Common myeloid progenitor, CD34-positive (primary cell): ENCODE measurements at regions of chr2 and their contacts with region 1.

Region 1: DNA sequence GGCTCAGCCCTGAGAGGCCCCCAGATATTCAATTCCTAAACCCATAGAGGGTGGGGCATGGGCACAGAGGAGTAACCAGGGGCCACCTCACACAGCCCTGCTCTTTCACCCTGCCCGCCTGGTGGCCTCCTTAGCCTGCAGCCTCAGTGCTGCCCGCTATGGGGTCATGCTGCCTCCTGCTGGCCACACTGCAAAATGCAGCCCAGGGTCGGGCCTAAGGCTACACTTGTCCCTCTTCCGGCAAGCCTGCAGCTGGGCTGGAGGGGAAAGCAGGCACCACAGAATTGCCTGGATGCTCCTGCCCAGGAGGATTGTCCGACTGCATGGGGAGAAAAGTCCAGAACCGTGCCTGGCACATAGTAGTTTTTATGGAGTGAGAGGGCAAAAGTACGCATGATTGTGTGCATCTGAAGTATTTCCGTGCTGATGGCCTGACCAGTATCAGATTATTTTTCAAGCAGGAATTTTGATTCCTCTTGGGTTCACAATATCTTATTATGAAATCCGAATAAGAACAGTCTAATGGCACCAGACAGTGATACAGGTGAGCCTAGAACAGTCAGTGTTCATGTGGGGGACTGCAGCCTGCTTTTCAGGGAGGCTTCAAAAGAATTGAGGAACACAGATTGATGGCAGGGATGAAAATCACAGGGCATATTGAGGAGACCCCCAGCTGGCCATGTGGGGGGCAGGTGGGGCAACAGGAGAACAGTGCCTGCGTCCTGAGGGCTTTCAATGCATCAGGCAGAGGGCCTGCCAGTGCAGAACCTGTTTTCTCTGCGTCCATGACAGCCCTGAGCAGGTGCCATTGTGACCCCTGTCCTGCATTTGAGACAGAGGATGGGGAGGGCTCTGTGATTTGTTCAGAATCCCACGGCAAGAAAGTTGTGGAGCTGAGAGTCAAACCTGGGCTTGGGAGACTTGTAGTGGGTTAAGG is 51.2 kb upstream of the ALPP start:
- DNase-seq: peak; percentile 72 to 84 (median 78)
- H3K4me3 ChIP-seq: no peak overlapping the region
- H3K27ac ChIP-seq: no peak overlapping the region
- H3K4me1 ChIP-seq: peaks cover 0 to 13% (median 8%) of the 10 kb centered on the region in 4 experiments
- H3K27me3 ChIP-seq: no peaks in the 10 kb centered on the region

Region 2: GRCh38 chr2:231900486-231900942 is 426.9 kb before region 1 on chr2:
- CTCF ChIA-PET with region 1: interaction called, 42 read pairs
- POLR2A ChIA-PET with region 1: no interaction called
- DNase-seq: peak; percentile 42 to 65 (median 61)
- H3K4me3 ChIP-seq: no peak overlapping the region
- H3K27ac ChIP-seq: no peak overlapping the region
- H3K4me1 ChIP-seq: peaks cover 0 to 2% (median 0%) of the 10 kb centered on the region in 4 experiments
- H3K27me3 ChIP-seq: peaks cover 0 to 2% (median 0%) of the 10 kb centered on the region in 5 experiments

Region 3: DNA sequence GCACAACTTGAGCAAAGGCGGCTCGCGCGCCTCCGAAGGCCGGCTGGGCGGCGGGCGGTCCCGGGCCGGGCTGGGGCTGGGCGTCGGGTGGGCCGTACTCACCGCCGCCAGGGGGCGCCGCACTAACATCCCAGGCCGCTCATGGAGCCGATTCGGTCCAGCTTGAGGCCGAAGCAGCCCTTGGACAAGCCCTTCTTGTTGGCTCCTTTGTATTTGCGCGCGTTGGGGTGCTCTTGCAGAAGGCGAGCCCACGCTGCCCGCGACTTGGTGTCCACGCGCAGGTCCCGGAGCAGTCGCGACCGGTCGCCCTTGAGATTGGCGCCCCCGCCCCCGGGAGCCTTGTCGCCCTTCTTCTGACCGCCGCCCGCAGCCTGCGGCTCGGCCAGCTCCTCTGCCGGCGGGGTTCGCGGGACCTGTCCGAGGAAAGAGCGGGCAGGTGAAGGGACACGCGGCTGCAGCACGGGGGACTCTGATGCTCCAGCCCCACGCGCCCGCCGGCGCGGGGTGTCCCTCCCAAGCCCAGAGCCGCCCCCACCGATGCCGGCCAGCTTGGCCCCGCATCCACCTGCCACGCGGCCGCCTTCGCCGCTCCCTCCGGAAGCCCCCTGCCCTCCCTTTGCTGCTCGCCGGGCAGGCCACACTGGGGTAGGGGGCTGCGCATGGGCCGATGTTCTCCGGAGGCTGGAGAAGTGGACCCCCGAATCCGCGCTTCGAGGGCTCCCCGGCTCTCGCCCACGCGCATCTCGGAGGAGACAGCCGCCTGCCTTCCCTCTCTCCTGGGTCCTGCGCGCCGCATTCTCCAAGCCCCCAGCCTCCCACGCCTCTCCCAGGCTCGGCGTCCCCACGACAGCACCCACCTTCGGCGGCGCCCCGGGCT is 401.8 kb before region 1 on chr2:
- CTCF ChIA-PET with region 1: interaction called, 63 read pairs
- POLR2A ChIA-PET with region 1: interaction called, 3 read pairs
- DNase-seq: peak; percentile 64 to 76 (median 72)
- H3K4me3 ChIP-seq: peak overlapping the region in 6 of 7 experiments; percentile 48 to 77 (median 64)
- H3K27ac ChIP-seq: no peak overlapping the region
- H3K4me1 ChIP-seq: peaks cover 0 to 32% (median 30%) of the 10 kb centered on the region in 4 experiments
- H3K27me3 ChIP-seq: peaks cover 0 to 63% (median 25%) of the 10 kb centered on the region in 5 experiments

Region 4: DNA sequence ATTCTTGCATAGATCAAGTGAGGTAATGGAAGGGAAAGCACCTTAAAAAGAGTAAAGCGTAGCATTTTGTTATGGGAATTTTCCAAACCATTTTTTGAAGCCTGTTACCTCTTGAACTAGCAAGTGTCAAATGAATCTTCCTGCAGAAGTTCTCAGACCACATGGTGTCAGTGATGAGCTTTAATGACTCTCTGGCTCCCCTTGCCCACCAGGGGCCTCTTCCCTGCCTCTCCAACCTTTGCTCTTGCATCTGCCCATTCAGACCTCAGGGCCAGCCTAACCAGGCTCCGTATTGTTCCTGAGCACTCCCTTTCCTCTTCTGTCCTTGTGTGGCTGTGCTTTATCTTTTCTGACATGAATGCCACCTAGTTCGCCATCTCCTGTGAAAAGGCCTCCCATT is 210.0 kb before region 1 on chr2:
- CTCF ChIA-PET with region 1: interaction called, 12 read pairs
- POLR2A ChIA-PET with region 1: no interaction called
- DNase-seq: peak in 2 of 3 donors; percentile 19 to 27
- H3K4me3 ChIP-seq: no peak overlapping the region
- H3K27ac ChIP-seq: no peak overlapping the region
- H3K4me1 ChIP-seq: no peaks in the 10 kb centered on the region
- H3K27me3 ChIP-seq: no peaks in the 10 kb centered on the region

Region 5: DNA sequence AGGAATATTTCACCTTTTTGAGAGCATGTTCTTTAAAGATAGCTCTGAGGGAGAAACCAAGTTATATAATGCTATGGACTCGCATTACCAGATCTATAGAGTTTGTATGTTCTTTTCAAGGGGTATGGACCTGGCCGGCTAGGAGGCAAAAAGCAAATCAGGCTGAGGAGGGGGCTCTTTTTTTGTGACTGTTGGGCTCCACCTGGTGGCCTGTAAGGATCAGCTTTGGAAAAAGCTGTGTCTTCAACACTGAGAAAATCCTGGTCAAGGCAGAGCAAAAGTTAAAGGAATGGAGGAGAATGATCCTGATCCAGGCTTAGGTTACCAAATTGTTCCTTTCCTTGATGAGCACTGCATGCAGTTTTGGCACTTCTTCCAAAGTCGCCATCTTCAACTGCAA is 185.3 kb before region 1 on chr2:
- CTCF ChIA-PET with region 1: interaction called, 25 read pairs
- POLR2A ChIA-PET with region 1: no interaction called
- DNase-seq: peak; percentile 46 to 59 (median 58)
- H3K4me3 ChIP-seq: no peak overlapping the region
- H3K27ac ChIP-seq: no peak overlapping the region
- H3K4me1 ChIP-seq: peaks cover 9 to 28% (median 16%) of the 10 kb centered on the region in 4 experiments
- H3K27me3 ChIP-seq: peaks cover 0 to 2% (median 0%) of the 10 kb centered on the region in 5 experiments

Region 6: GRCh38 chr2:232276084-232276732 is 51.2 kb before region 1 on chr2:
- CTCF ChIA-PET with region 1: no interaction called
- POLR2A ChIA-PET with region 1: no interaction called
- DNase-seq: no peak
- H3K4me3 ChIP-seq: no peak overlapping the region
- H3K27ac ChIP-seq: no peak overlapping the region
- H3K4me1 ChIP-seq: peaks cover 0 to 6% (median 2%) of the 10 kb centered on the region in 4 experiments
- H3K27me3 ChIP-seq: no peaks in the 10 kb centered on the region

Region 7: DNA sequence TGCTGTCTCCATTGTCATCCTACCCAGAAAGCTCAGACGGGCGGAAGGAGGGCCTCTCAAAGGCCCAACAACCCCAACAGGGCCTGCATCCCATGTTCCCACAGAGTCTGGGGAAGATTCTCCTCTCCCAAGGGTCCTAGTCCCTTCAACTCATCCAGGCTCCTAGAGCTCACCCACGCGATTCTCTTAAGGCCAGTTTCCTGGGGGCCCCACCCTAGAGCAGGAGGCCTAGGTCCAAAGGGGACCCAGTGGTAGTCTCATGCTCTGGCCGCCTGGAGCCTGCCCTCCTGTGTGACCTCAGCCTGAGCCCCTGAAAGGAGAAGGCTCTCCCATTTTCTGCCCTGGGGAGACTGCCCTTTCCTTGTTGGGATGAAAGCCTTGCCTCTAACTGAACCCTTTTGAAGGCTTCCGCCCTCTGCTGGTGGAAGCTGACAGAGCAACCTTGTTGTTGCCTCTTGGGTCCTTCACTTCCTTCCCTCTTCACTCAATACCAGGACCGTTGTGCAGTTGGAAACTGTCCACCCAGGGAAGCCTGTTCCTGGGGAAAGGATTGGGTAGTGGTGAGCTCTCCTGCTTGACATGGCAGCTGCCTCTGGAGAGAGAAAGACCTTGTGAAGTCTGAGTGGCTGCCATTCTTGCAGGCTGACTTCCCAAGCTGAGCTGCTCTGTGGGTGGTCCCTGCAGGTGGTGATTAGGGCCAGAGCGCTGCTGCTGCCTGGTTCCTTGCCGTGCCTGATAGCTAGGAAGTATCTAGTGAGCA is 34.8 kb before region 1 on chr2:
- CTCF ChIA-PET with region 1: interaction called, 45 read pairs
- POLR2A ChIA-PET with region 1: no interaction called
- DNase-seq: peak; percentile 50 to 77 (median 70)
- H3K4me3 ChIP-seq: no peak overlapping the region
- H3K27ac ChIP-seq: no peak overlapping the region
- H3K4me1 ChIP-seq: peaks cover 0 to 15% (median 13%) of the 10 kb centered on the region in 4 experiments
- H3K27me3 ChIP-seq: no peaks in the 10 kb centered on the region

Region 8: DNA sequence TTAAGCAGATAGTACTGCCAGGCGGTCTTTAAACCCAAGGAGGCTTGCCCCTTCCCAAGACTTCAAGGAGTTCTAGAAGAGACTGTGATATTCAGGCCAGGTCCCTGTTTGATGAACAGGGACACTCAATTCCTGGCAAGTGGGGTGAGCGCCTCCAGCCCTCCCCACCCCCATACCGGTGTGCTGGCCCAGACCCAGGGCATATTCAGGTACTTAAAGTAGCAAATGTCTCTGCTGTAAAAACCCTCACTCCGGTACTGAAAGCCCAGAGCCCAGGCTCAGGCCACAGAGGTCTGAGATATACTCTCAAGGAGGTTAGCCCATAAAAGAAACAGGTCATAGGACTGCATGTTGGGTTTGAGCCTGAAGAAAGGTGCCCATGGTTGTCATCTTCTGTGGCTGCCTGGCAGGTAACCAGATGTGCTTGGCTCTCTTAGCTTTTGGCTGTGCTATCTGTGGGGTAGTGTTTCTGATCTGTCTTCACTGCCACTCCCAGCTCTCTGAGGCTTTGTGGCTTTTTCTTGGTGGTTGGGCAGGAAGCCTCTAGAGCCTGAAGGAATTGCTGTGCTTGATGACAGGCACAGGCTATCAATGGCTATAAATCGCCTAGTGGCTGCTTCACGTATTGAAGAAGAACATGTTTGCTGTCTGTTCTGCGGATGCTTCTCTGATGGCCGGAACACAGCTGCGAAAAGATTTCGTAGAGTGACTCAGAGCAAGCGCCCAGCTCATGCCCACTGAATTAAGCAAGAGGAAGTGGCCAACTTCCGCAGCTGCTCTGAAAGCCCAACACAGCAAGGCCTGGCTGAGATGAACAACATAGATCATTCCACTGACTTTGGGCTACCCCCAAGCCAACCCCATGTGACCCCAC is 12.1 kb before region 1 on chr2:
- CTCF ChIA-PET with region 1: interaction called, 12 read pairs
- POLR2A ChIA-PET with region 1: interaction called, 3 read pairs
- DNase-seq: peak; percentile 94 to 99 (median 98)
- H3K4me3 ChIP-seq: peak overlapping the region in 4 of 7 experiments; percentile 6 to 49 (median 33)
- H3K27ac ChIP-seq: peak overlapping the region in 1 of 2 experiments; percentile 67
- H3K4me1 ChIP-seq: peaks cover 22 to 66% (median 53%) of the 10 kb centered on the region in 4 experiments
- H3K27me3 ChIP-seq: no peaks in the 10 kb centered on the region

Region 9: DNA sequence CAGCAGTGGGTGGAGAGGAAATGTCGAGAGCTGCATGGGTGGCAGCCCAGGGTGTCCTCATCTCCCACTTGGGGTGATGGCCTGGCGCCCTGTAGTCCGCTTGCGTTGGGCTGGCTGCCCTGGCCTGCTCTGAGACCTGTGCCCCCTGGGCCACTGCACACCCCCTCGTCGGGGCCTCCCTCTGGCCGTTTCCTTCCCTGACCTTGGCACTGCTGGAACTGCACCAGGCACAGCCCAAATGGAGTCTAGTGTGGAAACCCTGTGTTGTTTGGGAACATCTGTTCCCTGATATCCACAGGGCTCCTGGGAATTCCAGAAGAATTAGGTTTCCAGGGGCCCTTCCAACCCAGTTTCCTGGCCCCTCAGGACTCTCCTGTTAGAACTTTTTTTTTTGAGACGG is 319.9 kb after region 1 on chr2:
- CTCF ChIA-PET with region 1: no interaction called
- POLR2A ChIA-PET with region 1: no interaction called
- DNase-seq: no peak
- H3K4me3 ChIP-seq: no peak overlapping the region
- H3K27ac ChIP-seq: no peak overlapping the region
- H3K4me1 ChIP-seq: no peaks in the 10 kb centered on the region
- H3K27me3 ChIP-seq: peaks cover 0 to 7% (median 0%) of the 10 kb centered on the region in 5 experiments